PC-3 (cell line): ENCODE measurements at regions of chr16 and their contacts with region 1.

Region 1: DNA sequence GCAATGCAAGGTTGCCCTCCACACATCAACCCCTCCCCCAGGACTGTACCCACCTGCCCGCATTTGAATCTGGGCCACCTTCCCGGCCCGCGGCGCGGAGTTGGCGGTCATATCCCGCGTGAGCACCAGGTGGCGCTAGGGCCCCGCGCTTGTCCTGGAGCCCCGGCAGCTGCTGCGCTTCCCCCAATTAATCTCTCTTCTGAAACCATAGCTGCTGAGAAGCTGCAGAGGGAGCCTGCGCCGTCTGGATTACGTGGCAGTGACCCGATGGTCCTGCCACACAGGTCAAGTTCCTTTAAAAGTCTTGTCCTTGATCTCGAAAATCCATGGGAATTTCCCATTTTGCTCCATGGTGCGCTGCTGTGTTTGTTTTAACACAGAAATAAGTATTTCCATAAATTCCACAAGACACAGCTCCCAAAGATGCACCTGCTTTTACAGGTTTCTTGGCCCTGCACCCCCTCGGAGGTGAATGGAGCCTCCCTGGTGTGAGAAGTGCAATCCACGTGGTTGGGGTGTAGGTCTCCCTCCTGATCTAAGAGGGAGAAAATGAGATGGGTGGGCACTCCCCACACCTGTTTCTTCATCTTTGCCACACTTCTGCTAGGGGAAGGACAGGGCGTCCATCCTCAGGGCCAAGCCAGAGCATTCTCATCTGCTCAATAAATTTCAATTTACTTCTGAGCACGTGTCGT is 22.1 kb downstream of the COX4I1 start:
- DNase-seq: peak; percentile 67
- ATAC-seq: peak; percentile 86
- H3K4me3 ChIP-seq: no peak overlapping the region
- H3K27ac ChIP-seq: no peak overlapping the region
- H3K4me1 ChIP-seq: no peaks in the 10 kb centered on the region
- H3K27me3 ChIP-seq: peaks cover 13% of the 10 kb centered on the region
- CTCF ChIP-seq: peak; percentile 87

Region 2: GRCh38 chr16:85898521-85899442 is 77.2 kb after region 1 on chr16 and contains the start of gene IRF8:
- CTCF ChIA-PET with region 1: interaction called, 3 read pairs
- POLR2A ChIA-PET with region 1: no interaction called
- intact Hi-C with region 1: loop called (anchors 10 kb)
- DNase-seq: no peak
- ATAC-seq: no peak
- H3K4me3 ChIP-seq: no peak within 1 kb of the TSS
- H3K27ac ChIP-seq: no peak within 1 kb of the TSS
- H3K4me1 ChIP-seq: no peaks in the 10 kb centered on the region
- H3K27me3 ChIP-seq: peaks cover 80% of the 10 kb centered on the region
- CTCF ChIP-seq: no peak
- total RNA-seq, gene IRF8: not detected in 2 replicates

Region 3: GRCh38 chr16:85986931-85987749 is 165.6 kb after region 1 on chr16:
- CTCF ChIA-PET with region 1: interaction called, 10 read pairs
- POLR2A ChIA-PET with region 1: no interaction called
- intact Hi-C with region 1: no loop called
- DNase-seq: no peak
- ATAC-seq: no peak
- H3K4me3 ChIP-seq: peak overlapping the region; percentile 50
- H3K27ac ChIP-seq: no peak overlapping the region
- H3K4me1 ChIP-seq: no peaks in the 10 kb centered on the region
- H3K27me3 ChIP-seq: peaks cover 89% of the 10 kb centered on the region
- CTCF ChIP-seq: no peak

Region 4: DNA sequence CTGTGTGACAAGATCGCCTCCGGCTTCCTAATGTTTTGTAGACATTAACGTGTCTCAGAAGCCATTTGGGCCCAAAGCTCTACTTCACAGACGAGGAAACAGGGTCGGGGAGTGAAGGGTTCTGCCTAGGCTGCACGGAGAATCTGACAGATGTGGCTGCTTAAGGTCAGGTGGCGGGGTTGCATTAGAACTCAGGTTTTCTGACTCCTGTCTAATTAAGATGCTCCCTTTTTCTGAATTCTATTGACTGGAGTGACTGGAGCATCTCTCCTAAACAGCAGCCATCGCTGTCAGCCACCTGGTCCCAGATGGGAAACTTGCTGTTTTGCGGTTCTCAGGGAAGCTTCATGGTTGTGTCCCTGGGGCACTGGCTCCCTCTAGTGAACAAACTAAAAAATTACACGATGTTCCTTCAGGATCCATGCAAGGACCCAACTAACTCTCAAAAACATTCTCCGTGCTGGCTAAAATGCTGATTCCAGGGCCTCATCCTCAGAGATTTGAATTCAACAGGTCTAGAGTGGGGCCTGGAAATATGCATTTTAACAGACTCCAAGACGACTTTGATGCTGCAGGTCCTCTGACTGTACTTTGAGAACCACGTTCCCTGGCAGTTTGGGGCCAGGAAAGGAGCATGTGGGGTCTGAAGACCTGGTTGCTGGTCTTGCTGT is 194.7 kb after region 1 on chr16:
- CTCF ChIA-PET with region 1: interaction called, 12 read pairs
- POLR2A ChIA-PET with region 1: interaction called, 3 read pairs
- intact Hi-C with region 1: loop called (anchors 1 kb)
- DNase-seq: peak; percentile 53
- ATAC-seq: peak; percentile 29; the same call in 1 of the 2 replicates
- H3K4me3 ChIP-seq: no peak overlapping the region
- H3K27ac ChIP-seq: no peak overlapping the region
- H3K4me1 ChIP-seq: no peaks in the 10 kb centered on the region
- H3K27me3 ChIP-seq: peaks cover 32% of the 10 kb centered on the region
- CTCF ChIP-seq: peak; percentile 67

Region 5: GRCh38 chr16:86031141-86031678 is 209.6 kb after region 1 on chr16:
- CTCF ChIA-PET with region 1: interaction called, 15 read pairs
- POLR2A ChIA-PET with region 1: no interaction called
- intact Hi-C with region 1: no loop called
- DNase-seq: no peak
- ATAC-seq: no peak
- H3K4me3 ChIP-seq: no peak overlapping the region
- H3K27ac ChIP-seq: no peak overlapping the region
- H3K4me1 ChIP-seq: no peaks in the 10 kb centered on the region
- H3K27me3 ChIP-seq: peaks cover 38% of the 10 kb centered on the region
- CTCF ChIP-seq: no peak

Region 6: DNA sequence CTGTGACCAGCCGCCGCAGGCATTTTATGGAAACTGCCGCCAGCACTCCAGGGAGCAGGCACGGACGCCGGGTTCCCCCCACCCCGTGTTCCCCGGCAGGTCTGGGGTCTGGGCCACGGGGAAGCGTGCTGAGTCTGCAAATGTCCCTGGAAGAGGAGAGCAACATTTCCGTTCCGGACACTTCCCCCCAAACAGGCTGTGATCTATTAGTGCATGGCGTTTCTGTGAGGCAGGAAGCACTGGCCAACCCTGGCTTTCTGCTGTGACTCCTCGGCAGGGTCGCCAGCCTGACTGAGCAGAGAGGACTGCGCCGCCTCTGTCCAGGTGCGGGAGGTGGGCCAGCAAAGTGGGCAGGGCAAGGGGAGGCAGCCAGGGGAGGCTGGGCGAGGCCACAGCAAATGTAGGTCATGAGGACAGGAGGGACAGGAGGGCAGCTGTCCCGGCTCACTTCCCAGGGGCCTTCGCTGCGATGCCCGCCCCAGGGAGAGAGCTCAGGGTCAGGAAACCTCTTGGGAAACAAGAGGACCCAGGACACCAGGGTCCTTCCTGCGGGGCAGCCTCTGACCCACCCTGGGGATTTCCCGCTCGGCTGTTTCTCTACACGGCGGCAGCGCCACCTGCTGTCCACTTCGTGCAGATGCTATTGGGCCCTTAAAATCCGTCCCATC is 698.2 kb after region 1 on chr16:
- CTCF ChIA-PET with region 1: no interaction called
- POLR2A ChIA-PET with region 1: no interaction called
- intact Hi-C with region 1: loop called (anchors 2 kb)
- DNase-seq: peak; percentile 65
- ATAC-seq: peak; percentile 56
- H3K4me3 ChIP-seq: peak overlapping the region; percentile 44; the same call in 1 of the 2 replicates
- H3K27ac ChIP-seq: no peak overlapping the region
- H3K4me1 ChIP-seq: 0 out of 2 replicates have a peak, but pooled peaks cover 6% of the 10 kb centered on the region
- H3K27me3 ChIP-seq: peaks cover 40% of the 10 kb centered on the region
- CTCF ChIP-seq: peak; percentile 80